Naive thymus-derived CD8-positive, alpha-beta T cell (primary cell): ENCODE measurements at regions of chr16 and their contacts with region 1.

Region 1: DNA sequence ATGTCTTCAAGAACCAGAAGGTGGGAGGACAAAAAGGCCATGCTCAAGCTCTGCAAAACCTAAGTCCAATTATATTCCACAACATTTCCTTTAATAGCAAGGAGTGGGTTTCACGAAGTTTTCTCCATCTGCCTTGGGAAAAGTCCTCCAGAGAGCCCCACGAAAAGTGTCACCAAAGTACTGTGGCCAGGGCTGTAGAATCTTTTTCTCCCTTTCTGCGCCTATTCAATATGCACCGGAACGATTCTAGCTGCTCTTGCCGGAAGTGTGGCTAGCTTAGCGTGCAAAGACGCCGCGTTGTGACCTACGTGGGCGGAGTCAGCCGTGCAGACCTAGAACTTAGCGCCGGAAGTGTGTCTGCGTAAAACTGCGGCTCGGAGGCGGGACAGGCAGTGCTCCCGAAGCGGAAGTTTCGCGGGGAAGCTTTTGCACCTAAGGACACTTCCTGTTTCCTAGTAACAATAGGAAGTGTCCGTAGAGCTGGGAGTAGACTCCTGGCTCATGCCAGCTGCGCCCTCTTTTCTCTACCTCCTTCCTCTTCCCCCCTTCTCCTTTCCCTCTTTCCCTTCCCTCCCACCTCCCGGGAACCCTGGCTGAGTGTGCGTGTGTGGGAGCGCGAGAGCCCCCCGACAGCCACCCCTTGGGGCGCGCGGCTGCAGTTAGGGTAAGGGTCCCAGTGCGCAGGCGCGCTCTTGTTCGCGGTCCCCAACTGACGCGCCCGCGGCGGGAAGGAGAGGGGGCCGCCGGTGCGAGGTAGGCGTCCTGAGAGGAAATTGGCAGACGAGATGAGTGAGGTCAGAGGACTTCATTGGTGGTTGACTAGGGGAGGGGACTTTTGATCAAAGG is at the starts of genes ZNF646 and ZNF668:
- DNase-seq: peak; percentile 90 to 99 (median 98)
- ATAC-seq: peak; percentile 80 to 84
- H3K4me3 Mint-ChIP-seq: peak within 1 kb of the TSS; percentile 81 to 97 (median 96)
- H3K27ac Mint-ChIP-seq: peak within 1 kb of the TSS; percentile 90 to 99 (median 96)
- H3K4me1 Mint-ChIP-seq: peaks cover 21 to 52% (median 45%) of the 10 kb centered on the region in 4 donors
- H3K27me3 Mint-ChIP-seq: no peaks in the 10 kb centered on the region
- polyA plus RNA-seq, gene ZNF646: 2.8 to 9.1 (median 4.0) TPM
- polyA plus RNA-seq, gene ZNF668: 4.2 to 9.1 (median 7.5) TPM

Region 2: GRCh38 chr16:30957456-30958174 is 116.6 kb before region 1 on chr16 and contains the start of gene SETD1A:
- POLR2A ChIA-PET with region 1: interaction called, 13 read pairs
- DNase-seq: peak; percentile 91 to 99 (median 98)
- ATAC-seq: peak; percentile 85 to 89
- H3K4me3 Mint-ChIP-seq: peak within 1 kb of the TSS; percentile 89 to 99 (median 95)
- H3K27ac Mint-ChIP-seq: peak within 1 kb of the TSS; percentile 97 to 99 (median 98)
- H3K4me1 Mint-ChIP-seq: peaks cover 21 to 40% (median 36%) of the 10 kb centered on the region in 4 donors
- H3K27me3 Mint-ChIP-seq: peaks cover 0 to 2% (median 0%) of the 10 kb centered on the region in 5 donors
- polyA plus RNA-seq, gene SETD1A: 0.35 to 2.0 (median 0.77) TPM

Region 3: GRCh38 chr16:31032736-31033708 is 41.2 kb before region 1 on chr16 and contains the start of gene STX4:
- POLR2A ChIA-PET with region 1: interaction called, 26 read pairs
- DNase-seq: peak; percentile 92 to 99 (median 97)
- ATAC-seq: peak; percentile 77 to 84
- H3K4me3 Mint-ChIP-seq: peak within 1 kb of the TSS; percentile 95 to 100 (median 98)
- H3K27ac Mint-ChIP-seq: peak within 1 kb of the TSS; percentile 93 to 100 (median 99)
- H3K4me1 Mint-ChIP-seq: peaks cover 16 to 39% (median 34%) of the 10 kb centered on the region in 4 donors
- H3K27me3 Mint-ChIP-seq: peaks cover 0 to 3% (median 0%) of the 10 kb centered on the region in 5 donors
- polyA plus RNA-seq, gene STX4: 23.2 to 31.3 (median 23.7) TPM

Region 4: GRCh38 chr16:31117391-31118197 is 43.4 kb after region 1 on chr16 and contains the start of gene KAT8:
- POLR2A ChIA-PET with region 1: interaction called, 45 read pairs
- DNase-seq: peak; percentile 93 to 99 (median 98)
- ATAC-seq: peak; percentile 92
- H3K4me3 Mint-ChIP-seq: peak within 1 kb of the TSS; percentile 83 to 93 (median 88)
- H3K27ac Mint-ChIP-seq: peak within 1 kb of the TSS; percentile 68 to 97 (median 94)
- H3K4me1 Mint-ChIP-seq: peaks cover 18 to 38% (median 24%) of the 10 kb centered on the region in 4 donors
- H3K27me3 Mint-ChIP-seq: no peaks in the 10 kb centered on the region
- polyA plus RNA-seq, gene KAT8: 58.0 to 90.5 (median 67.4) TPM

Region 5: GRCh38 chr16:31458844-31459721 is 384.9 kb after region 1 on chr16 and contains the start of gene ARMC5:
- POLR2A ChIA-PET with region 1: interaction called, 17 read pairs
- DNase-seq: peak; percentile 90 to 99 (median 96)
- ATAC-seq: peak; percentile 71 to 76
- H3K4me3 Mint-ChIP-seq: peak within 1 kb of the TSS; percentile 90 to 97 (median 93)
- H3K27ac Mint-ChIP-seq: peak within 1 kb of the TSS; percentile 92 to 100 (median 98)
- H3K4me1 Mint-ChIP-seq: peaks cover 16 to 54% (median 42%) of the 10 kb centered on the region in 4 donors
- H3K27me3 Mint-ChIP-seq: no peaks in the 10 kb centered on the region
- polyA plus RNA-seq, gene ARMC5: 6.2 to 9.8 (median 8.0) TPM